ENCODE measurements at regions of chr13 and their contacts with region 1.

Region 1: GRCh38 chr13:94033830-94034642 is 445.4 kb downstream of the DCT start:
- DNase-seq: peak; percentile 97
- H3K4me3 ChIP-seq: no peak overlapping the region
- H3K27ac ChIP-seq: peak overlapping the region; percentile 99
- H3K4me1 ChIP-seq: peaks cover 71% of the 10 kb centered on the region
- H3K27me3 ChIP-seq: no peaks in the 10 kb centered on the region
- CTCF ChIP-seq: no peak

Region 2: GRCh38 chr13:92573467-92574057 is 1460.5 kb before region 1 on chr13:
- CTCF ChIA-PET with region 1: no interaction called
- POLR2A ChIA-PET with region 1: no interaction called
- intact Hi-C with region 1: loop called (anchors 5 kb)
- DNase-seq: peak; percentile 69
- H3K4me3 ChIP-seq: no peak overlapping the region
- H3K27ac ChIP-seq: no peak overlapping the region
- H3K4me1 ChIP-seq: no peaks in the 10 kb centered on the region
- H3K27me3 ChIP-seq: no peaks in the 10 kb centered on the region
- CTCF ChIP-seq: peak; percentile 70

Region 3: GRCh38 chr13:93151277-93151676 is 882.8 kb before region 1 on chr13:
- CTCF ChIA-PET with region 1: no interaction called
- POLR2A ChIA-PET with region 1: interaction called, 13 read pairs
- intact Hi-C with region 1: no loop called
- DNase-seq: peak; percentile 5
- H3K4me3 ChIP-seq: no peak overlapping the region
- H3K27ac ChIP-seq: no peak overlapping the region
- H3K4me1 ChIP-seq: no peaks in the 10 kb centered on the region
- H3K27me3 ChIP-seq: no peaks in the 10 kb centered on the region
- CTCF ChIP-seq: no peak

Region 4: GRCh38 chr13:93248627-93249047 is 785.4 kb before region 1 on chr13:
- CTCF ChIA-PET with region 1: no interaction called
- POLR2A ChIA-PET with region 1: no interaction called
- intact Hi-C with region 1: loop called (anchors 5 kb)
- DNase-seq: peak; percentile 92
- H3K4me3 ChIP-seq: no peak overlapping the region
- H3K27ac ChIP-seq: peak overlapping the region; percentile 77
- H3K4me1 ChIP-seq: peaks cover 67% of the 10 kb centered on the region
- H3K27me3 ChIP-seq: no peaks in the 10 kb centered on the region
- CTCF ChIP-seq: peak; percentile 81

Region 5: GRCh38 chr13:93963266-93964145 is 70.5 kb before region 1 on chr13:
- CTCF ChIA-PET with region 1: no interaction called
- POLR2A ChIA-PET with region 1: no interaction called
- intact Hi-C with region 1: loop called (anchors 5 kb)
- DNase-seq: peak; percentile 56
- H3K4me3 ChIP-seq: no peak overlapping the region
- H3K27ac ChIP-seq: no peak overlapping the region
- H3K4me1 ChIP-seq: peaks cover 28% of the 10 kb centered on the region
- H3K27me3 ChIP-seq: no peaks in the 10 kb centered on the region
- CTCF ChIP-seq: no peak

Region 6: DNA sequence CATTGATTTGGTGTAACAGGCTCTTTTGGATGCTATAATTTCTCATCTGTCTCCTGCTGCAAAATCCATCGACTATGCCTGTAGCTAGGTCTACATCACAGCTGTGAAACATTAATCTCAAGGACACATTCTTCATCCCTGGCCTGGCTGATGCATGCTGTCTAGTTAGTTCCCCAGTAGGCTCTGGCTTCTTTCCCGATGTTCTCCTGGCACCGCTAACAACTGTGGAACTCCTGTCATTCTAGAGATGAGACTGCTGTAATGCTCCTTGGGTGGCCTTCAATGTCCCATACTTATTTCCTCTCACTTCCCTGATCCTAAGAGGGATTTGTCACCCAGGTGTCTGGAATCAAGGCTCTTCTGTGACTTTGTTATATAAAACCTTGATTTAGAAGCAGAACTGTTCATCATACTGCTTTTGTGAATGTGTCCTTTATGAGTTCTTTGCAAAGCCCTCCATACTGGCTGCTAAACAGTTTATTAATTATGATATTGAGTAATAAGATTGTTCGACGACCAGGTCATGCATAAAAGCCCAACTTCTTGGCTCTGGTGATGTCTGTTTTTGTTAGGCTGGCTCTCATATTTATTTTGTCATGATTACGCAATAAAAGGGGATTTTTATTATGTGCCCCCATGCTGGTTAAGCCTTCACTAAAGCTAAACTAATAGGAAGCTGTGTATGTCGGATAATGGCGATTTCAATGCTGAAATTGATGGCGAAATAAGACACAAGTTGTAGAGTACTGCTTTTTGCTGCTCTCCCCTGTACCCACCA is 218.0 kb after region 1 on chr13:
- CTCF ChIA-PET with region 1: no interaction called
- POLR2A ChIA-PET with region 1: no interaction called
- intact Hi-C with region 1: loop called (anchors 1 kb)
- DNase-seq: peak; percentile 91
- H3K4me3 ChIP-seq: peak overlapping the region; percentile 6
- H3K27ac ChIP-seq: peak overlapping the region; percentile 79
- H3K4me1 ChIP-seq: peaks cover 50% of the 10 kb centered on the region
- H3K27me3 ChIP-seq: no peaks in the 10 kb centered on the region
- CTCF ChIP-seq: no peak

Region 7: GRCh38 chr13:94362411-94362909 is 328.4 kb after region 1 on chr13:
- CTCF ChIA-PET with region 1: no interaction called
- POLR2A ChIA-PET with region 1: no interaction called
- intact Hi-C with region 1: loop called (anchors 1 kb)
- DNase-seq: peak; percentile 95
- H3K4me3 ChIP-seq: no peak overlapping the region
- H3K27ac ChIP-seq: peak overlapping the region; percentile 57
- H3K4me1 ChIP-seq: peaks cover 10% of the 10 kb centered on the region
- H3K27me3 ChIP-seq: no peaks in the 10 kb centered on the region
- CTCF ChIP-seq: peak; percentile 85